GM13977 (cell line): ENCODE measurements at regions of chr3 and their contacts with region 1.

Region 1: DNA sequence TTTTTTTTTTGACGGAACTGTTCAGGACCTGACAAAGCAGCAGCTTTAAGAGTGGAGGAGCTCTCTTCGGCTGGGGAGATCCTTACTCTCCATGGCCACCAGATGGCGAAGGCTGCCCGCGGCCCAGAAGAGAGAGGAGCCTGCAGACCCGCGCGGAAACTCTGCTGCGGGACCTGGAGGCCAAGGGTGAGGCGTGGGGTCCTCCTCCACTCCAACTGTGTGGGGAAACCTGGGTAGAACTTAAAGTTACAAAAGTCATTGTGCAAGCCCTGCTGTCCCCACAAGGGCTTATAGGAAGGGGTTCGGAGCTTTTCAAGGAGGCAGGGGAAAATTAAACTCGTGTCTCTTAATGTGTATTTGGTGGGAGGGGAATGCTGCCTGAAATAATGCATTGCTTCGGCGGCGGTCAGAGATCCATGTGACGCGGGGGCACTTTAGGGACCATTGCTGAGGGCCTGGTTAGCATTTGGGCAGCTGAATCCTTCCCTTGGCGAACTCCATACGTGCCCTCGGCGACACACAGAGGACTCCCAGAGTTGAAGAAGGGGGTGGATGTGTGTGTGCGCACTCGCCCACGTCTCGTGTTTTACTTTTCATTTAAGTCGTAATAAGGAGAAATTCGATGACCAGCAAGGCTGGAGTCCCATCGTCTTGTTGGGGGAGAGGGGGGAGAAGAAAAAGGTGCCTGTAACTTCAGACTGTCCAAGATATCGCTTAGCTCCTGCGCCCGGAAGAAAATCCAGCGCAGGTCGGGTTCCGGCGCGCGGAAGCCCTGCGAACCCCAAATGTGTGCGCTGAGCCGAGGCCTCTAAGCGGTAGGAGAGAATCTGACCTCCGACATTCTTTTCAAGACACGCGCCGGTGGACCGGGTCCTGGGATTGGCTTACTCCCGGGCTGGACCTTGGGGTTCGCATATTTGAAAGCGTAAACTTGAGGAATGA is 9.7 kb downstream of the EOMES start:
- DNase-seq: peak; percentile 86
- CTCF ChIP-seq: peak; percentile 89

Region 2: DNA sequence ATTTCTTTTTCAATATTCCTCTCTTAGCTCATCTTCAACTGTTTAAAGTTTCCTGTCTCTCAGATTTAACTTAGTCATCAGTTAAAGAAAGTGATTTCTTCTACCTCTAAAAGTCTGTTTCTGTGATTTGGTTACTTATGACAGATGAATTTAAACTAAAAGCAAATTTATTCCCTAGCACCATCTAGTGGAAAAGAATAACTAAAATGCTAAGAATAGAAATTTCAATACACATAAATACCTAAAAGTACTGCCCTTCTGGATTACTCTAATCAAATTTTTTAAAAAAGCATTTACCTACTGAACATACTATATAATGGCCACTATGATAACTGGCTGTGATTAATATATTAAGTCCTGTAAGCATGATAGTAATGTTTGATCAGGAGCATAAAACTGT is 622.1 kb after region 1 on chr3:
- in situ Hi-C with region 1: loop called (anchors 10 kb)
- DNase-seq: no peak
- CTCF ChIP-seq: peak; percentile 25

Region 3: DNA sequence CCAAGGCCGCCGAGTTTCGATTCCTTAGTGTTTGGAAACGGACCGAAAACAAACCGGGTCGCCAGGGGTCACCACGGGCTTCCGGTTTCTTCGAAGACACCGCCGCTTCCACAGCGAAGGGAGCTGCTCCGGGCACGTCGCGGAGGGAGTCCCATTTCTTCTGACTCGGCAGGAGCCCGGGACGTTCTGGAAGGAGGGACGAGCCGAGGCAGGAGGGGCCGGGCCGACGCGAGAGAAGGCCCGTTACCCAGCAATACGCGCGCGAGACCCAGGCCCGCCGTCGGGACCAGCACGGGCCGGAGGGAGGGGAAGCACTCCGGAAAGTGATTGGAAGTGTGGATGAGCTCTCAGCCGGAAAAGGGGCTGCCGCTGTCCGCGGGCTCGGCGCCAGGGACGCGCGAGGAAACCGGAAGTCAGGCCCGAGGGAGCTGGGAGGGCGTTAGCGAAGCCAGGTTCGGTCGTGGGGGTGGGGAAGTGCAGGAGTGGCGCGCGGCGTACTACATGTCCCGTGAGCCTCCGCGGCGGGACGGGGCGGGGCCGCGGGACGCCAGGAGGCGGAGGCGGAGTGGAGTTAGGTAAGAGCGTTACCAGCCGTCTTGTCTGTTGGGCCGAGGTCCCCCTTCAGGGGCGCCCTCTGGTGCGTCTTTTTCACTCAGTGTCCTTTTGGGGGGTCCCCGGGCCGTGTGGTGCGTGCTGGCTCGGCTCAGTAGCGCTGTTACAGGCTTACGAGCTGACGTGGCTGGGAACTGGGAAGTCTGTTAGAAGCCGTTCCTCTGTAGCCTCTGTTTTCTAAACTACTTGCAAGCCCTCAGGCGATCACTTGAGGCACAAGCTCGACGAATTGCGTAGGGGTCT is 636.4 kb after region 1 on chr3 and contains the starts of genes AZI2 and ZCWPW2:
- in situ Hi-C with region 1: no loop called
- DNase-seq: peak; percentile 82
- CTCF ChIP-seq: peak; percentile 26